MCF 10A (cell line): ENCODE measurements at regions of chr7 and their contacts with region 1.

Region 1: GRCh38 chr7:99123571-99124041 is 20.3 kb downstream of the SMURF1 start:
- DNase-seq: peak; percentile 68
- H3K4me3 Mint-ChIP-seq: no peak overlapping the region
- H3K27ac Mint-ChIP-seq: peak overlapping the region; percentile 61
- H3K4me1 Mint-ChIP-seq: peaks cover 41% of the 10 kb centered on the region
- H3K27me3 Mint-ChIP-seq: no peaks in the 10 kb centered on the region
- CTCF ChIP-seq: no peak

Region 2: GRCh38 chr7:99112097-99112496 is 11.5 kb before region 1 on chr7:
- CTCF ChIA-PET with region 1: interaction called, 4 read pairs
- POLR2A ChIA-PET with region 1: interaction called, 13 read pairs
- intact Hi-C with region 1: no loop called
- DNase-seq: no peak
- H3K4me3 Mint-ChIP-seq: no peak overlapping the region
- H3K27ac Mint-ChIP-seq: peak overlapping the region; percentile 47
- H3K4me1 Mint-ChIP-seq: peaks cover 40% of the 10 kb centered on the region
- H3K27me3 Mint-ChIP-seq: no peaks in the 10 kb centered on the region
- CTCF ChIP-seq: no peak

Region 3: GRCh38 chr7:99392677-99393354 is 269.2 kb after region 1 on chr7:
- CTCF ChIA-PET with region 1: no interaction called
- POLR2A ChIA-PET with region 1: no interaction called
- intact Hi-C with region 1: no loop called
- DNase-seq: no peak
- H3K4me3 Mint-ChIP-seq: no peak overlapping the region
- H3K27ac Mint-ChIP-seq: no peak overlapping the region
- H3K4me1 Mint-ChIP-seq: no peaks in the 10 kb centered on the region
- H3K27me3 Mint-ChIP-seq: no peaks in the 10 kb centered on the region
- CTCF ChIP-seq: no peak